Naive thymus-derived CD4-positive, alpha-beta T cell (primary cell): ENCODE measurements at regions of chr4 and their contacts with region 1.

Region 1: DNA sequence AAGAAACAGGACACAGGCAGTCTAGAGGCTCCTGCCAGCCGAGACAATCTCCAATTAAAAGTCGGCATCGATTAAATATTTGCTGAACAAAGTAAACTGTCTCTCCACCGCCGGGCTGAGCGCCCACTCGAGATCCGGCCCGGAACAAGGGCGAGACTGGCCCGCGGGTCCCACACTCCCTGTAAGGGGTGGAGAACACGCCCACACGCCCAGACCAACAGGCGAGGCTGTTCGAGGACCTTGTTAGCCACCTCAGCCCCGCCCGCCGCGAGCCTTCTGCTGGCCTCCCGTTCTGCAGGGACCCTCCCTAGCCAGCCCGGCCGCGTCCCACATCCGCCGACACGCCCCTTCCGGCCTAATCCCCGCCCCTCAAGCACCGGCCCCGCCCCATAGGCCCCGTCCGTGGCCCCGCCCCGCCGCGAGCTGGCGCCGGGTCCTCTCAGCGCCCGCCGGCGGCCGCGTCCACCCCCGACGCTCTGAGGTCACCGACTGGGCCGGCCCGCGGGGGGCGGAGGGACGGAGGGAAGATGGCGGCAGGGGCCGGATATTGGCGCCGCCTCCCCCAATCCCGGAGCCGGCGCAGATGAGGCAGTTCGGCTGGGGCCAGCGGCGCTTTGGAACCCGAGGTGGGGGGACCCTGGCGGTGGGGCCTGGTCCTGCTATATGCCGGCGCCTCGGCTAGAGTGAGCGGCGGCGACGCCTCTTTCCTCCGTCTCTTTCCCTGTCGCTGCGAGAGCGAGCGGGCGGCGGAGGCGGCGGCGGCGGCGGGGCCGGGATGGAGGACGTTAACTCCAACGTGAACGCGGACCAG is at the start of gene SLAIN2:
- DNase-seq: peak; percentile 91 to 100 (median 96)
- ATAC-seq: peak; percentile 93
- H3K4me3 ChIP-seq: peak within 1 kb of the TSS; percentile 76
- H3K4me3 Mint-ChIP-seq: peak within 1 kb of the TSS; percentile 81 to 99 (median 96)
- H3K27ac ChIP-seq: peak within 1 kb of the TSS; percentile 91
- H3K27ac Mint-ChIP-seq: peak within 1 kb of the TSS; percentile 91 to 98 (median 96)
- H3K4me1 ChIP-seq: peaks cover 17 to 20% of the 10 kb centered on the region in 2 donors
- H3K4me1 Mint-ChIP-seq: peaks cover 40 to 54% (median 45%) of the 10 kb centered on the region in 7 donors
- H3K27me3 ChIP-seq: no peaks in the 10 kb centered on the region
- H3K27me3 Mint-ChIP-seq: no peaks in the 10 kb centered on the region
- total RNA-seq, gene SLAIN2: 53.2 to 87.5 (median 77.2) TPM

Region 2: DNA sequence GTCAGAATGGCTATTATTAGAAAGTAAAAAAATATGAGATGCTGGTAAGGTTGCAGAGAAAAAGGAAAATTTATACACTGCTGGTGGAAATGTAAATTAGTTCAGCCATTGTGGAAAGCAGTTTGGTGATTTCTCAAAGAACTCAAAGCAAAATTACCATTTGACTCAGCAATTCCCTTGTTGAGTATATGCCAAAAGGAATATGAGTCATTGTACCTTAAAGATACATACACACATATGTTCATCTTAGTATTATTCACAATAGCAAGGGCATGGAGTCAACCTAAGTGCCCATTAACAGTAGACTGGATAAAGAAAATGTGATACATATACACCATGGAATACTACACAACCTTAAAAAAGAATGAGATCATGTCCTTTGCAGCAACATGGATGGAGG is 1025.8 kb before region 1 on chr4:
- CTCF ChIA-PET with region 1: no interaction called
- POLR2A ChIA-PET with region 1: no interaction called
- intact Hi-C with region 1: no loop called
- DNase-seq: no peak
- ATAC-seq: no peak
- H3K4me3 ChIP-seq: no peak overlapping the region
- H3K4me3 Mint-ChIP-seq: no peak overlapping the region
- H3K27ac ChIP-seq: no peak overlapping the region
- H3K27ac Mint-ChIP-seq: no peak overlapping the region
- H3K4me1 ChIP-seq: no peaks in the 10 kb centered on the region
- H3K4me1 Mint-ChIP-seq: no peaks in the 10 kb centered on the region
- H3K27me3 ChIP-seq: no peaks in the 10 kb centered on the region
- H3K27me3 Mint-ChIP-seq: peaks cover 0 to 13% (median 6%) of the 10 kb centered on the region in 5 donors

Region 3: GRCh38 chr4:47914220-47914925 is 426.8 kb before region 1 on chr4 and contains the start of gene NFXL1:
- CTCF ChIA-PET with region 1: no interaction called
- POLR2A ChIA-PET with region 1: no interaction called
- intact Hi-C with region 1: loop called (anchors 1 kb)
- DNase-seq: peak; percentile 90 to 95 (median 93)
- ATAC-seq: peak; percentile 98
- H3K4me3 ChIP-seq: peak within 1 kb of the TSS; percentile 92
- H3K4me3 Mint-ChIP-seq: peak within 1 kb of the TSS; percentile 93 to 99 (median 96)
- H3K27ac ChIP-seq: peak within 1 kb of the TSS; percentile 88
- H3K27ac Mint-ChIP-seq: peak within 1 kb of the TSS; percentile 89 to 98 (median 96)
- H3K4me1 ChIP-seq: peaks cover 12 to 15% of the 10 kb centered on the region in 2 donors
- H3K4me1 Mint-ChIP-seq: peaks cover 18 to 41% (median 32%) of the 10 kb centered on the region in 7 donors
- H3K27me3 ChIP-seq: no peaks in the 10 kb centered on the region
- H3K27me3 Mint-ChIP-seq: no peaks in the 10 kb centered on the region
- total RNA-seq, gene NFXL1: 10.4 to 19.3 (median 13.2) TPM

Region 4: GRCh38 chr4:48127682-48128394 is 213.3 kb before region 1 on chr4:
- CTCF ChIA-PET with region 1: interaction called, 3 read pairs
- POLR2A ChIA-PET with region 1: interaction called, 10 read pairs
- intact Hi-C with region 1: loop called in 1 of 2 experiments (anchors 1 kb)
- DNase-seq: peak; percentile 30 to 78 (median 71)
- ATAC-seq: peak; percentile 82
- H3K4me3 ChIP-seq: peak overlapping the region; percentile 52
- H3K4me3 Mint-ChIP-seq: peak overlapping the region in 9 of 10 donors; percentile 80 to 99 (median 91)
- H3K27ac ChIP-seq: peak overlapping the region; percentile 79
- H3K27ac Mint-ChIP-seq: peak overlapping the region in 7 of 9 donors; percentile 89 to 97 (median 95)
- H3K4me1 ChIP-seq: peaks cover 32 to 81% of the 10 kb centered on the region in 2 donors
- H3K4me1 Mint-ChIP-seq: peaks cover 0 to 89% (median 84%) of the 10 kb centered on the region in 7 donors
- H3K27me3 ChIP-seq: no peaks in the 10 kb centered on the region
- H3K27me3 Mint-ChIP-seq: no peaks in the 10 kb centered on the region

Region 5: GRCh38 chr4:48149827-48150370 is 191.3 kb before region 1 on chr4:
- CTCF ChIA-PET with region 1: no interaction called
- POLR2A ChIA-PET with region 1: no interaction called
- intact Hi-C with region 1: no loop called
- DNase-seq: no peak
- ATAC-seq: no peak
- H3K4me3 ChIP-seq: no peak overlapping the region
- H3K4me3 Mint-ChIP-seq: no peak overlapping the region
- H3K27ac ChIP-seq: no peak overlapping the region
- H3K27ac Mint-ChIP-seq: no peak overlapping the region
- H3K4me1 ChIP-seq: no peaks in the 10 kb centered on the region
- H3K4me1 Mint-ChIP-seq: no peaks in the 10 kb centered on the region
- H3K27me3 ChIP-seq: no peaks in the 10 kb centered on the region
- H3K27me3 Mint-ChIP-seq: no peaks in the 10 kb centered on the region

Region 6: GRCh38 chr4:48269861-48270522 is 71.2 kb before region 1 on chr4:
- CTCF ChIA-PET with region 1: no interaction called
- POLR2A ChIA-PET with region 1: interaction called, 4 read pairs
- intact Hi-C with region 1: loop called (anchors 1 kb)
- DNase-seq: peak; percentile 48 to 88 (median 69)
- ATAC-seq: peak; percentile 95
- H3K4me3 ChIP-seq: peak overlapping the region; percentile 88
- H3K4me3 Mint-ChIP-seq: peak overlapping the region; percentile 95 to 98 (median 97)
- H3K27ac ChIP-seq: peak overlapping the region; percentile 73
- H3K27ac Mint-ChIP-seq: peak overlapping the region; percentile 20 to 94 (median 86)
- H3K4me1 ChIP-seq: peaks cover 0 to 6% of the 10 kb centered on the region in 2 donors
- H3K4me1 Mint-ChIP-seq: peaks cover 6 to 28% (median 22%) of the 10 kb centered on the region in 7 donors
- H3K27me3 ChIP-seq: no peaks in the 10 kb centered on the region
- H3K27me3 Mint-ChIP-seq: no peaks in the 10 kb centered on the region

Region 7: DNA sequence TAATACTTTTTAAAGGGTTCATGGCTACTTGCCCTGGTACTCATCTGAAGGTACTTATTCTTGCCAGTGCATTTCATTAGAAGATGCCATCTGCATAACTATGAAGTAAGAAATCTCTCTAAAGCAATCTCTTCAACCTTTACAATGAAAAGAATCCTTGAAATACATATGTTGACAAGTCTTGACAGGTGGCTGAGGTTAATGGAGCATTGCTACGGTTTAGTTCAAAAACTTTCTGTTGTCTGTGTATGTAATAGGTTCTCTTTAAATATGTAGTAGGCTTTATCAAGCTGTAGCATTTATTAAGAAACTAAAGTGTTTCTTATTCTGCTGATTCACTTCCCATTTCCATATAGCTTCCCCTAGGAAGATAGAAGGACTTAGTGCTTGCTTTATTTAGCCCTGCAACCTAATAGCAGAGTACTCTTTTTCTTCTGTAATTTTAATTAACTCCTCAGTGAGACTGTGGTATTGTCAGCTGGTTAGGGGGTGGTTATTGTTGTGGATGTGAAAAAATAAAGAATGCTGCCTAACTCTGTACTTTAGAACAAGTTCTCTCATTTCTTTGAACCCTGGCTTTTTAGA is 39.5 kb after region 1 on chr4:
- CTCF ChIA-PET with region 1: no interaction called
- POLR2A ChIA-PET with region 1: no interaction called
- intact Hi-C with region 1: loop called in 1 of 2 experiments (anchors 5 kb)
- DNase-seq: no peak
- ATAC-seq: no peak
- H3K4me3 ChIP-seq: no peak overlapping the region
- H3K4me3 Mint-ChIP-seq: no peak overlapping the region
- H3K27ac ChIP-seq: no peak overlapping the region
- H3K27ac Mint-ChIP-seq: peak overlapping the region in 1 of 9 donors; percentile 38
- H3K4me1 ChIP-seq: peaks cover 0 to 4% of the 10 kb centered on the region in 2 donors
- H3K4me1 Mint-ChIP-seq: peaks cover 2 to 20% (median 11%) of the 10 kb centered on the region in 7 donors
- H3K27me3 ChIP-seq: no peaks in the 10 kb centered on the region
- H3K27me3 Mint-ChIP-seq: no peaks in the 10 kb centered on the region

Region 8: DNA sequence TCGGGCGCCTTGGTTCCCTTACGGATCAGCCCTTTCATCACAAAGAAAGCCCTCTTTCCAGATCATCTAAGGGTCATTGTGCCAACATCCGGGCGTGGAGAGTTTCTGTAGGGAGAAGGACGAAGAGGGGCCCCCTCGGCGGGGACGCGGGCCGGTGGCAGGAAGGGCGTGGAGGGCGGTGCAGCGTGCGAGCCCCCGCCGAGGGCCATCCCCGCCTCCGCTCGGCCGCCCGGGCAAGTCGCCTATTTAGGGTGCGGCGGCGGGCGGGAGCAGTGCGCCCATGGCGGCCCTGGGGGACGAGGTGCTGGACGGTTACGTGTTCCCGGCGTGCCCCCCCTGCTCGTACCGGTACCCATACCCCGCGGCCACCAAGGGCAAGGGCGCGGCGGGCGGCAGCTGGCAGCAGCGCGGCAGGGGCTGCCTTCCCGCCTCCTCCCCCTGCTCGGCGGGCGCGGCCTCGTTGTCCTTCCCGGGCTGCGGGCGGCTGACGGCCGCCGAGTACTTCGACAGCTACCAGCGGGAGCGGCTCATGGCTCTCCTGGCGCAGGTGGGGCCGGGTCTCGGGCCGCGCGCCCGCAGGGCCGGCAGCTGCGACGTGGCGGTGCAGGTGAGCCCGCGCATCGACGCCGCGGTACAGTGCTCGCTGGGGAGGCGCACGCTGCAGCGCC is 149.0 kb after region 1 on chr4 and contains the start of gene ZAR1:
- CTCF ChIA-PET with region 1: no interaction called
- POLR2A ChIA-PET with region 1: no interaction called
- intact Hi-C with region 1: loop called in 1 of 2 experiments (anchors 5 kb)
- DNase-seq: peak in 3 of 9 donors; percentile 3 to 15 (median 11)
- ATAC-seq: peak; percentile 30
- H3K4me3 ChIP-seq: no peak within 1 kb of the TSS
- H3K4me3 Mint-ChIP-seq: peak within 1 kb of the TSS; percentile 34 to 72 (median 59)
- H3K27ac ChIP-seq: no peak within 1 kb of the TSS
- H3K27ac Mint-ChIP-seq: no peak within 1 kb of the TSS
- H3K4me1 ChIP-seq: no peaks in the 10 kb centered on the region
- H3K4me1 Mint-ChIP-seq: peaks cover 0 to 3% (median 0%) of the 10 kb centered on the region in 7 donors
- H3K27me3 ChIP-seq: peaks cover 12 to 16% of the 10 kb centered on the region in 2 donors
- H3K27me3 Mint-ChIP-seq: peaks cover 40 to 69% (median 46%) of the 10 kb centered on the region in 5 donors
- total RNA-seq, gene ZAR1: not detected

Region 9: GRCh38 chr4:48906206-48907173 is 565.3 kb after region 1 on chr4 and contains the start of gene OCIAD2:
- CTCF ChIA-PET with region 1: no interaction called
- POLR2A ChIA-PET with region 1: interaction called, 3 read pairs
- intact Hi-C with region 1: loop called (anchors 1 to 2 kb)
- DNase-seq: peak; percentile 59 to 88 (median 86)
- ATAC-seq: peak; percentile 97
- H3K4me3 ChIP-seq: peak within 1 kb of the TSS; percentile 80
- H3K4me3 Mint-ChIP-seq: peak within 1 kb of the TSS; percentile 93 to 99 (median 97)
- H3K27ac ChIP-seq: peak within 1 kb of the TSS; percentile 82
- H3K27ac Mint-ChIP-seq: peak within 1 kb of the TSS; percentile 89 to 99 (median 96)
- H3K4me1 ChIP-seq: peaks cover 18 to 33% of the 10 kb centered on the region in 2 donors
- H3K4me1 Mint-ChIP-seq: peaks cover 32 to 63% (median 52%) of the 10 kb centered on the region in 7 donors
- H3K27me3 ChIP-seq: no peaks in the 10 kb centered on the region
- H3K27me3 Mint-ChIP-seq: no peaks in the 10 kb centered on the region
- total RNA-seq, gene OCIAD2: 42.0 to 142 (median 97.5) TPM